ENCODE measurements at regions of chr5 and their contacts with region 1.

Region 1: GRCh38 chr5:123036391-123037103 is at the start of gene PPIC:
- DNase-seq: peak; percentile 22
- H3K4me3 Mint-ChIP-seq: peak within 1 kb of the TSS; percentile 59
- H3K27ac Mint-ChIP-seq: no peak within 1 kb of the TSS
- H3K4me1 Mint-ChIP-seq: peaks cover 11% of the 10 kb centered on the region
- H3K27me3 Mint-ChIP-seq: peaks cover 41% of the 10 kb centered on the region
- total RNA-seq, gene PPIC: not detected

Region 2: GRCh38 chr5:122816756-122817155 is 219.8 kb before region 1 on chr5:
- CTCF ChIA-PET with region 1: no interaction called
- POLR2A ChIA-PET with region 1: no interaction called
- intact Hi-C with region 1: no loop called
- DNase-seq: no peak
- H3K4me3 Mint-ChIP-seq: no peak overlapping the region
- H3K27ac Mint-ChIP-seq: no peak overlapping the region
- H3K4me1 Mint-ChIP-seq: no peaks in the 10 kb centered on the region
- H3K27me3 Mint-ChIP-seq: no peaks in the 10 kb centered on the region

Region 3: DNA sequence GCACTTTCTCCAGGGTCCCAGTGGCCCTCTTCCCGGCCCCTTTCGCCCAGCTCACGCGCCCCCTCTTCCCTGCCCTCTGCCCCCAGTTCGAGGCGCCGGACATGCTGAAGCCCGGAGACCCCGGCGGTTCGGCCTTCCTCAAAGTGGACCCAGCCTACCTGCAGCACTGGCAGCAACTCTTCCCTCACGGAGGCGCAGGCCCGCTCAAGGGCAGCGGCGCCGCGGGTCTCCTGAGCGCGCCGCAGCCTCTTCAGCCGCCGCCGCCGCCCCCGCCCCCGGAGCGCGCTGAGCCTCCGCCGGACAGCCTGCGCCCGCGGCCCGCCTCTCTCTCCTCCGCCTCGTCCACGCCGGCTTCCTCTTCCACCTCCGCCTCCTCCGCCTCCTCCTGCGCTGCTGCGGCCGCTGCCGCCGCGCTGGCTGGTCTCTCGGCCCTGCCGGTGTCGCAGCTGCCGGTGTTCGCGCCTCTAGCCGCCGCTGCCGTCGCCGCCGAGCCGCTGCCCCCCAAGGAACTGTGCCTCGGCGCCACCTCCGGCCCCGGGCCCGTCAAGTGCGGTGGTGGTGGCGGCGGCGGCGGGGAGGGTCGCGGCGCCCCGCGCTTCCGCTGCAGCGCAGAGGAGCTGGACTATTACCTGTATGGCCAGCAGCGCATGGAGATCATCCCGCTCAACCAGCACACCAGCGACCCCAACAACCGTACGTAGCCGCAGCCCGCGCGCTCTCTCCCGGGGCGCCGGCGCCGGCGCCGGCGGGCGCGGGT is 53.5 kb after region 1 on chr5:
- CTCF ChIA-PET with region 1: no interaction called
- POLR2A ChIA-PET with region 1: no interaction called
- intact Hi-C with region 1: loop called (anchors 5 kb)
- DNase-seq: no peak
- H3K4me3 Mint-ChIP-seq: no peak overlapping the region
- H3K27ac Mint-ChIP-seq: no peak overlapping the region
- H3K4me1 Mint-ChIP-seq: peaks cover 31% of the 10 kb centered on the region
- H3K27me3 Mint-ChIP-seq: peaks cover 72% of the 10 kb centered on the region

Measured in activated CD4-positive, alpha-beta memory T cell treated with anti-CD3 and anti-CD28 coated beads for 36 hours (primary cell).